Activated naive CD4-positive, alpha-beta T cell treated with anti-CD3 and anti-CD28 coated beads for 36 hours (primary cell): ENCODE measurements at regions of chr11 and their contacts with region 1.

Region 1: DNA sequence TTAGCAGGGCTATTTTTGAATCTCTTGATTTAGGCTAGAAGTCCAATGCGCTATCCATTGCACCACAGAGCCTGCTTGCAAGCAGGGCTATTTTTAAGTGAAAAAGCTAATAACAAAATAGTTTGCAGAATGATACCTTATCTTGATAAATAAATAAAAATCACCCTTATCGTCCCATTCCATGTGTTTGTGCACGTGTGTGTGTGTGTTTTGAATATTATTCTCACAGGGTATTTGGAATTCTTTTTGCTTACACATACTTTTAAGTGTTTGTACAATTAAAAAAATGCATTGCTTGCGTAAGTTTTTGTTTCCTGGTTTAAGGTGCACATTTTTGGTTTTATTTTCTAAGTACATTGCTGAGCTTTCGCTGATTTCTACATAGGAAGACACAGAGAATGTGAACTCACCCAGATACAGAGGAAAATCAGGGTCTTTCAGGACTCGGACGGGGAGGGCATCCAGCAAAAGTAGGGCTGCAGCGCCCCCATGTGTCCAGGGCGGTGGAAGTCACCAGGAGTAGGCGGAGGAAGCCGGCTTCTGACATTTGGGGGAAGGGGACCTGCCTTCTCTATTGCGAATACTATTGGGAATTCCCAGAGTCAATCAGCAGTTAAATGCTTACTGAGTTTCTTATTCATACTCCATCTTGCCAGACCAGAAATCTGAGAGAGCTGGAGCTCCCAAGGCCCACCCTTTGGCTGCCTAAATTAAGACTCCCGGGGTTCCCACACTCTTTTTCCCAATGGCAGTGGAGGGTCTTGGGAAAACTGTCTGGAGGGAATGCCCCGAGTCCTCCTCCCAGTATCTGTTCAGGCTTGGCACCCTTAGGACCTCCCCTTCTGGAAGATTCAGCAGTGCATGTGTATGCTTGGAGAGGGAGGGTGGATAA is 27.2 kb downstream of the SLC1A2 start:
- DNase-seq: peak; percentile 93
- H3K4me3 Mint-ChIP-seq: peak overlapping the region; percentile 17
- H3K27ac Mint-ChIP-seq: no peak overlapping the region
- H3K4me1 Mint-ChIP-seq: peaks cover 39% of the 10 kb centered on the region
- H3K27me3 Mint-ChIP-seq: no peaks in the 10 kb centered on the region

Region 2: DNA sequence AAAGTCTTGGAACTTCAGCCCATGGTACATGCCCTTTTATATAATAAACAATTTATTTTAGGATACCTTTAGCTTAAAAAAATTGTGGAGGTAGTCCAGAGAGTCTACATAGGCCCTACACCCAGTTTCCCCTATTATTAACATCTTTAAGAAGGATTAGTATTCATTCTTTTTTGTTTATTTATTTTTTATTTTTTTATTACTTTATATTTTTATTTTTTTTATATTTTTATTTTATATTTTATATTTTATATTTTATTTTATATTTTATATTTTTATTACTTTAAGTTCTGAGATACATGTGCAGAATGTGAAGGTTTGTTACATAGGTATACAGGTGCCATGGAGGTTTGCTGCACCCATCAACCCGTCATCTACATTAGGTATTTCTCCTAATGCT is 1018.4 kb before region 1 on chr11:
- CTCF ChIA-PET with region 1: no interaction called
- intact Hi-C with region 1: loop called (anchors 5 kb)
- DNase-seq: no peak
- H3K4me3 Mint-ChIP-seq: no peak overlapping the region
- H3K27ac Mint-ChIP-seq: no peak overlapping the region
- H3K4me1 Mint-ChIP-seq: peaks cover 12% of the 10 kb centered on the region
- H3K27me3 Mint-ChIP-seq: no peaks in the 10 kb centered on the region

Region 3: GRCh38 chr11:34565417-34566207 is 826.6 kb before region 1 on chr11:
- CTCF ChIA-PET with region 1: interaction called, 3 read pairs
- intact Hi-C with region 1: loop called (anchors 5 kb)
- DNase-seq: peak; percentile 60
- H3K4me3 Mint-ChIP-seq: no peak overlapping the region
- H3K27ac Mint-ChIP-seq: no peak overlapping the region
- H3K4me1 Mint-ChIP-seq: no peaks in the 10 kb centered on the region
- H3K27me3 Mint-ChIP-seq: peaks cover 5% of the 10 kb centered on the region

Region 4: DNA sequence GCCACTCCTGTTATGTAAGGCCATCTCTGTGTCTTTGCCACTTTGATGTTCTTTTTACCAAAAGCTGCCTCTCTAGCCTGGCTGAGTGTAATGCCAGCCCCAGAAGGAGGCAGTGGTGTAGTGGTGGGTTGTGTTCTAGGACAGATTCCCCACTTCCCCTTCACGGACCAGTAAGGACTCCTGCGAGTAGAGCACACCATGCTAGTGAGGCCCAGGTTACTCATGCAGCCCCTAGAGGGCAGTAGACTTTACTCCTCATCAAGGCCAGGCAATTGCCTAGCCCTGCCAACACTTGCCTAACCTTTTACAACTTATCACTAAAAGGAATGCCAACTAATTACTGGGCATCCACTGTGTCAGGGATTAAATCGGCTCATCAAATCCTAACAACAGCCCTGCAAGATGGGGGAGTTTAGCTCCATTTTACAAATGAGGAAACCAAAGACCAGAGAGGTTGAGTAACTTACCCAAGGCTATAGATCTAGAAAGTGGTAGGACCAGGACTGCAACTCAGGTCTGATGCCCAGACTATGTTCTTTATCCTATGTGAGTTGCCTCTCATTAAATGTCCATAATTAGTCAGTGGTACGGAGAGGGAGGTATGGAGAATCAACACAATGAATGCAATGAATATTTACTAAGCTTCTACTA is 551.3 kb before region 1 on chr11:
- CTCF ChIA-PET with region 1: no interaction called
- intact Hi-C with region 1: loop called (anchors 2 kb)
- DNase-seq: peak; percentile 32
- H3K4me3 Mint-ChIP-seq: no peak overlapping the region
- H3K27ac Mint-ChIP-seq: no peak overlapping the region
- H3K4me1 Mint-ChIP-seq: no peaks in the 10 kb centered on the region
- H3K27me3 Mint-ChIP-seq: peaks cover 8% of the 10 kb centered on the region

Region 5: DNA sequence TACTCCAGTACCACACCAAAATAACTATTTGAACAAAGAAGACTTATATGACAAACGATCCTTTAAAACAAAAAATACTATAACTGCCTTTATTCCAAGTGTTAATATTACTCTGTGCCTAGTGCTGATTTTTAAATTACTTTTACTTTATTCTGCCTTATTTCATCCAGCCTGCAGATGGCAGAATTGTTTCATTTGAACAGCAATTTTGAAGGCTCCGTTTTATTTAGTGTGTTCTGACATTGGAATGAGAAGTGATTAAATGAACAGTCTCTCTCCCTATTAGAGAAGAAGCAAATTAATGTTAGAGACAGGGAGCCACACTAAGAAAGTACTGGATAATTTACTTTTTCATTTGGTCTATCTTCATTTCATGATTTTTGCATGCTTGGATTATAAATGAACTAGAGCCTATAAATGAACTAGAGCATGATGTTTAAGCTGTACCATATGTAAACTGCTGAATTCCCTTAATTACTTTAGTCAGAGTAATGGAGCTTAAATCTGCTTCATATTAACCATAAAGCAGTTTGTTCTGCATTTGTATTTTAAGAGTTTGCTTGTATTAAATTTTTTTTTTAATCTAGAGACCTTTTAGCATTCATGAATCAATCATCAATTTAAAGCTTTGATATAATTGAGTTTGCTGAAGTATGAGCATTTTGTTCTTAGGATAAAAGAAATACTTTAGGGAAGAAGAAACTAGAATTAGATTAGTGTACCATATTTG is 465.9 kb before region 1 on chr11:
- CTCF ChIA-PET with region 1: interaction called, 78 read pairs
- intact Hi-C with region 1: loop called (anchors 1 kb)
- DNase-seq: peak; percentile 22
- H3K4me3 Mint-ChIP-seq: no peak overlapping the region
- H3K27ac Mint-ChIP-seq: no peak overlapping the region
- H3K4me1 Mint-ChIP-seq: peaks cover 17% of the 10 kb centered on the region
- H3K27me3 Mint-ChIP-seq: no peaks in the 10 kb centered on the region

Region 6: GRCh38 chr11:35082321-35083182 is 309.6 kb before region 1 on chr11:
- CTCF ChIA-PET with region 1: no interaction called
- intact Hi-C with region 1: loop called (anchors 5 kb)
- DNase-seq: peak; percentile 89
- H3K4me3 Mint-ChIP-seq: peak overlapping the region; percentile 66
- H3K27ac Mint-ChIP-seq: peak overlapping the region; percentile 90
- H3K4me1 Mint-ChIP-seq: peaks cover 91% of the 10 kb centered on the region
- H3K27me3 Mint-ChIP-seq: no peaks in the 10 kb centered on the region

Region 7: DNA sequence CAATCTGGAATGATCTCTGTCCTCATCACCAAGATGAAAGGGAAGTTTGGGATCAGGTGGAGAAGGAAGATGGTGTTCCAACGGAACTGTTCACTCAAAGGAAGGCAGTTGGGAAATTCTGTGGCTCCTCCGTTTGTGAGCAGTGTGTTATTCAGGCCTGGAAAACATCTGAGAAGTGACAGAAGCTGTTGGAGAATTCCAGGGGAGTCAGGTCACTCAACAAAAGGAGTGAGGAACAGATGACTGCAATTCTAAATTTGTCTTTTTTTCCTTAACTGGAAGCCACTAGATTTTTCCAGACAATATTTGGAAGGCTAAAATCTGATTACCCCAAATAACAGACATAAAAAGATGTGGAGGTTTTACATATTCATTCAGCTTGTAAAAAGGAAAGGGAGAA is 145.4 kb before region 1 on chr11:
- CTCF ChIA-PET with region 1: interaction called, 6 read pairs
- intact Hi-C with region 1: loop called (anchors 1 kb)
- DNase-seq: no peak
- H3K4me3 Mint-ChIP-seq: no peak overlapping the region
- H3K27ac Mint-ChIP-seq: no peak overlapping the region
- H3K4me1 Mint-ChIP-seq: peaks cover 66% of the 10 kb centered on the region
- H3K27me3 Mint-ChIP-seq: no peaks in the 10 kb centered on the region